Activated B cell treated with CpG ODN at 0.5 μM for 24 hours (primary cell): ENCODE measurements at regions of chr7 and their contacts with region 1.

Region 1: DNA sequence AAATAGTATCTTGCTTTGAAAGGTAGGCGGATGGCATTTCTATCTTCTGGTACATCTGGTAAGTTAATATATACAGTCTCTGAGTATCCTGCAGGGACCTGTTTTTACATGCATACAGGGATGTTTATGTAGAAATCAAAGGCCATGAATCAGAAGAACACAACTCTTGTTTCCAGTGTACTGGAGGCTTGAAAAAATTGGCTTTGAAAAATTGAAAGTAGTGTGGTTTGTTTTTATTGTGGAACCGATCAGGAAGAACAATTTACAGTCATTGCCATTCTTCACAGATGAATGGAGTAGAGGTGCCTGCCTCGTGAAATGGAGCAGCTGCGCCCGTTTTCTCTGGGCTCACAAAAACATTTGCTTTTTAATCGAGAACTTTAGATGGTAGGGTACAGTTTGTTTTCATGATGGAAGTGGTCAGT is 54.0 kb upstream of the RPA3 start:
- DNase-seq: no peak
- ATAC-seq: peak; percentile 78
- H3K4me3 Mint-ChIP-seq: peak overlapping the region; percentile 84
- H3K27ac Mint-ChIP-seq: peak overlapping the region; percentile 93
- H3K4me1 Mint-ChIP-seq: peaks cover 46% of the 10 kb centered on the region
- H3K27me3 Mint-ChIP-seq: no peaks in the 10 kb centered on the region
- CTCF ChIP-seq: no peak

Region 2: DNA sequence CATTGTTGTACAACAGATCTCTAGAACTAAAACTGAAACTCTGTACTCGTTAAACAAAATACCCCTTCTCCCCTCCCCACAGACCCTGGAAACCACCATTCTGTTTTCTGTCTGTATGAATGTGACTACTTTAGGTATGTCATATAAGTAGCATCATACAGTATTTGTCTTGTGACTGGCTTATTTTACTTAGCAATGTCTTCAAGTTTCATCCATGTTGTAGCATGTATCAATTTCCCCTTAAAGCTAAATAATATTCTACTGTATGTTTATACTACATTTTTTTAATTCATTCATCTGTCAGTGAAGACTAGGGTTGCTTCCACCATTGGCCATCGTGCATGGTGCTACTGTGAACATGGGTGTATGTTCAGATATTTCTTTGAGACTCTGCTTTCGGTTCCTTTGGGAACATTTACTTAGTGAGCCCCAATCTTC is 17.2 kb after region 1 on chr7:
- CTCF ChIA-PET with region 1: interaction called, 3 read pairs
- POLR2A ChIA-PET with region 1: no interaction called
- intact Hi-C with region 1: loop called (anchors 2 kb)
- DNase-seq: no peak
- ATAC-seq: peak; percentile 75
- H3K4me3 Mint-ChIP-seq: no peak overlapping the region
- H3K27ac Mint-ChIP-seq: peak overlapping the region; percentile 22
- H3K4me1 Mint-ChIP-seq: peaks cover 22% of the 10 kb centered on the region
- H3K27me3 Mint-ChIP-seq: no peaks in the 10 kb centered on the region
- CTCF ChIP-seq: no peak

Region 3: DNA sequence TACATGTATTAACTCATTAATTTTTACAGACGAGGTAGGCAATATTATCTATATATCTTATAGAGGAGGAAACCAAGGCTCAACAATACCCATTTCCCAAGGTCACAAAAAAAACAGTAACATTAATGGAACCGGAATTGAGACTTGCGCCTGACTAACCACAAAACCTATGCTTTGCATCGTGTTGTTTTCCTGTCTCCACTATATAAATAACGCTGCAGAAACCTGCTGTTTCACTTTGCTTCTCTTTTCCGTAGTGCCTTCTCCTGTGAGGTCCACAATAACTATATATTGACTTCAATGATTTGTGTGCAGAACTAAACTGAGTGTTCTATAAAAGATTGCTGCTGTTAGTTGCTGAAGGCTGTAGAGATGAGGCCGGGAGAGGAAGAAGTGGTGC is 43.7 kb after region 1 on chr7:
- CTCF ChIA-PET with region 1: no interaction called
- POLR2A ChIA-PET with region 1: no interaction called
- intact Hi-C with region 1: loop called (anchors 2 kb)
- DNase-seq: no peak
- ATAC-seq: peak; percentile 56
- H3K4me3 Mint-ChIP-seq: peak overlapping the region; percentile 67
- H3K27ac Mint-ChIP-seq: peak overlapping the region; percentile 82
- H3K4me1 Mint-ChIP-seq: peaks cover 71% of the 10 kb centered on the region
- H3K27me3 Mint-ChIP-seq: no peaks in the 10 kb centered on the region
- CTCF ChIP-seq: no peak

Region 4: GRCh38 chr7:7830122-7830878 is 57.9 kb after region 1 on chr7:
- CTCF ChIA-PET with region 1: no interaction called
- POLR2A ChIA-PET with region 1: no interaction called
- intact Hi-C with region 1: no loop called
- DNase-seq: no peak
- ATAC-seq: no peak
- H3K4me3 Mint-ChIP-seq: no peak overlapping the region
- H3K27ac Mint-ChIP-seq: no peak overlapping the region
- H3K4me1 Mint-ChIP-seq: peaks cover 13% of the 10 kb centered on the region
- H3K27me3 Mint-ChIP-seq: no peaks in the 10 kb centered on the region
- CTCF ChIP-seq: no peak

Region 5: DNA sequence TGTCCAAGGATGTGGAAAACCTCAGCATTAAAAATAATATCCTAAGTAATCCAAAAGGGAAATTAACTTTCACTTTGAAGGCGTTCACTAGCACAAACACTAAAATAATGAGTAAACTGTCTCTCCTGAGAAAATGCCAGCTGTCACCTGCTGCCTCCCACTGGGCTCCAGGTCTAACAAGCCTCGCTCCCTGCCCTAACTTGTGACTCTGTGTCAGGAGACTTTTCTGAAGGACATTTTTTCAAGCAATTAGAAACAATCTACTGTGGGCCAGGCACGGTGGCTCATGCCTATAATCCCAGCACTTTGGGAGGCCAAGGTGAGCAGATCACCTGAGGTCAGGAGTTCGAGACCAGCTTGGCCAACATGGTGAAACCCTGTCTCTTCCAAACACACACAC is 123.3 kb after region 1 on chr7:
- CTCF ChIA-PET with region 1: no interaction called
- POLR2A ChIA-PET with region 1: interaction called, 13 read pairs
- intact Hi-C with region 1: no loop called
- DNase-seq: no peak
- ATAC-seq: no peak
- H3K4me3 Mint-ChIP-seq: no peak overlapping the region
- H3K27ac Mint-ChIP-seq: no peak overlapping the region
- H3K4me1 Mint-ChIP-seq: no peaks in the 10 kb centered on the region
- H3K27me3 Mint-ChIP-seq: no peaks in the 10 kb centered on the region
- CTCF ChIP-seq: no peak